Ovary (tissue), 10 donors: ENCODE measurements at regions of chr15 and their contacts with region 1.

Region 1: DNA sequence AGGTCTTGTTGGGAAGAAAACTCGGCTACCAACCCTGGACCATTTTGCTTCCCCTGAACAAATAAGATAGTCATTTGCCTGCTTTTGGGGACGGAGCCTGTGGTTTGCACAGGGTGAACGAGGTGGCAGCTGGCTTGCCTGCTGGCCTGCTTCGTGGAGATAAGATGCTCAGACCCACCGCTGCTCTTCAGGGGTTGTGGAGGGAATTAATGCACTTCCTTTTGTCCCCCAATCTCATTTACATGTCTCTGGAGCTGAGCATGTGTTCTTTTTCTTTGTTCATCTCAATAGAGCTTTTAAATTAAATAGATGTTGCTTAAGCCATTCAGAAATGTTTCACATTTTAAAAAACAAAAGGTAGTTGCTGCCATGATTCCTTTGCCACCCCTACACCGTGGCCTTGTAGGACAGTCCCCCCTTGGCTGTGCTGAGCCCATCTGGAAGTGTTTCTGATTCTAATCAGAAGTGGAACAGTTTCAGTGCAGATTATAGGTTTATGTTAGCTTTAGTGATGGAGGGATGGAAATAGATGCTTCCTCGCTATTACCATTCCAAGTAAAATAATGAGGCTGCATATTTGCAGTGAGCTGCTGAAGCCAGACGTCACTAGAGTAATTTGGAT is 25.6 kb downstream of the APBA2 start:
- DNase-seq: no peak
- H3K4me3 ChIP-seq: no peak overlapping the region
- H3K27ac ChIP-seq: no peak overlapping the region
- H3K4me1 ChIP-seq: no peaks in the 10 kb centered on the region
- H3K27me3 ChIP-seq: no peaks in the 10 kb centered on the region
- CTCF ChIP-seq: no peak
- EP300 ChIP-seq: no peak
- POLR2A ChIP-seq: no peak

Region 2: DNA sequence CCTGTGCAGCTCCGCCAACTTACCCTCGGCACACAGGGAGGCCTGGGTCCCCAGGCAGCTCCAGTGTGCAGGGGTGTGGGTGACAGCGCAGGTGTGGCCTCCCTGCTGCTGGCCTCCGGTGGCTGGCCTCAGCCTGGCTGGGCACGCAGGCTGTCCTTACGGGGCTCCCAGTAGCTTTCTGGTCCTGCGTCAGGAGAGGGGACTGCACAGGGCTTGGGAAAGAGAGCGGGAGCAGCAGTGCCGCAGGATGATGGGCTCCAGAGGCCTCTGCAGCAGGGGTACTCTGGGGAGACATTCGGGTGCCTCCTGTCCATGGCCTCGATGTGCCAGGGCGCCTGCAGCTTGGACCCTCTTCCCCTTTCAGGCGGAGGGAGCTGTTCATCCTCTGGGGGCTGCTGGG is 16.3 kb before region 1 on chr15:
- intact Hi-C with region 1: loop called in 1 of 4 experiments (anchors 2 kb)
- DNase-seq: no peak
- H3K4me3 ChIP-seq: no peak overlapping the region
- H3K27ac ChIP-seq: no peak overlapping the region
- H3K4me1 ChIP-seq: no peaks in the 10 kb centered on the region
- H3K27me3 ChIP-seq: no peaks in the 10 kb centered on the region
- CTCF ChIP-seq: no peak
- EP300 ChIP-seq: no peak
- POLR2A ChIP-seq: no peak